ENCODE measurements at regions of chr1 and their contacts with region 1.

Region 1: DNA sequence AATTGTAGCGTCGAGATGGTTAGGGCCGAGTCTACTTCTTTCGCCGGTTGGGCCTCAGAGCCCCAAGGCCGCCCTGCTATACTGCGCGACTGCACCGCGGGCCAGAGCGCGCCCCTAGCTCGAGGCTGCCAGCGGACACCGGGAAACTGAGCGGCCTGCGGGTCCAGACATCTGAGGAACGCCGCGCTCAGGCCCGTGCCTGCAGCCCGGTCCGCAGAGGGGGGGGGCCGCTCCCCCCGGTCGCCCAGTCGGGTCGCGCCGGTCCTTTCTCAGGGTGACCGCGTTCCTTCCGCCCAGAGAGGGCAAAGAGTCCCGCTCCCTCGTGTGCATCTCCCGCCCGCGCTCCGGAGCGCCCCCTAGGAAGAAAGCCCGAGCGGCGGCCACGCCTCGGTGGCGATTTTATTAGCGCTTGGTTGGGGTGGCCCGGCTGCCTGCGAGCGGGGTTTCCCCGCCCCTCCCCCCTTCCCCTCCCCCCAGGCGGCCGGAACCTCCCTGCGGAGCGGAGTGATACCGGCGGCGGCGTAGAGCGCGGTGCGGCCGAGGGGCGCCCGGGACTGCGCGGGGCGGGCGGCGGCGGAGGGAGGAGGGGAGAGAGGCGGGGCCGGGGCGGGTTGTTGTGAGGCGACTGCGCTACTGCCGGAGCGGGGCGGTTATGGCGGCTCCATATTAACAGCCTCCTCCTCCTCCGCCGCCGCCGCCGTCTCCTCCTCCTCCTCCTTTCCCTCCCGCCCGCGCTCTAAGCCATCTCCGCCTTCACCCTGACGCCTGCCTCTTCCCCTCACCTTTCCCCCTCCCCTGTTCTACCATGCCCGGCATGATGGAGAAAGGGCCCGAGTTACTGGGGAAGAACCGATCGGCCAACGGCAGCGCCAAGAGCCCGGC is at the start of gene RCOR3:
- DNase-seq: peak; percentile 92 to 93
- ATAC-seq: peak; percentile 67 to 72
- H3K4me3 ChIP-seq: peak within 1 kb of the TSS; percentile 76 to 96 (median 90)
- H3K27ac ChIP-seq: peak within 1 kb of the TSS; percentile 97 to 100 (median 98)
- H3K4me1 ChIP-seq: peaks cover 18 to 26% of the 10 kb centered on the region in 2 donors
- H3K27me3 ChIP-seq: no peaks in the 10 kb centered on the region
- CTCF ChIP-seq: peak; percentile 51 to 67 (median 54)
- POLR2A ChIP-seq: peak; percentile 65 to 71
- total RNA-seq, gene RCOR3: 41.3 to 72.9 (median 61.3) TPM

Region 2: DNA sequence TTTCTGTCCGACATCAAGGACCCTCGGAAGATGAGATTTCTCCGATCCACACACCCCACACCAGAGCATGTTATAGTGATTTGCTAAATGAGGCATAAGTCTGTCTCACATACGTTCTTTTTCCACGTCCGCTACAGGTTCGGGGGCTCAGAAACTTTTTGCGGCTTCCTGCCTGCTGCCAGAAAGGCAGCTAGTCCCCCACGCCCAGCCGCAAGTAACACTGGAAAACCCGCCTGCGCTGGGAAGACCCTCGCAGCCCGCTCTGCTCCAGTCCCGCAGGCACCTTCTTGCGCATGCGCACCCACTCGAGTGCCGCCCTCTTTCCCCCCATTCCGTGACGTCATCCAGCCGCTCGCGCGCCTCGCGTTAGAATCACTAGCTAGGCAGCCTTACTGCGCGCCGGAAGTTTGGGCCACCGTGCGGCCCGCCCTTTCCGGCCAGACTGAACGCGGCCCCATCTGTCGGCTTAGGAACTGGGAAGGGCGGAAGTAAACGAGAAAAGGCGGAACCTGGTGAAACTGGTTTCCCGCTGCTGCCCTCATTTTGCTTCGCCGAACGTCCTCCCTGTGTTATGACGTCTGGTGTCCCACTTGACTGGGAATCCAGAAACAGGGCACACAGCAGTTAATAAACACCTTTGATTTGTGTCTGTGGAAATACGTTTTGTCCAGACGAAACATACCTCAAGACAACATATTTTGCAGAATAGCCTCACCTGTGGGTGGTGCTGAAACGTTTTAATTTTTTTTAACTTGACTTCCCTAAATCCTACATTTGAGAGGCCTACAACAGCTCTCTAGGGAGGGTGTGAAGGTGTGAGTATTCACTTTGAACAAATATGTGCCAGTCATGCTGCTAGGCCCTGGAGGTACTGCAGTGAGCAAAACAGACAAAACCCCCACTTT is 1474.5 kb before region 1 on chr1 and contains the start of gene C1orf74:
- in situ Hi-C with region 1: no loop called
- intact Hi-C with region 1: no loop called
- DNase-seq: peak; percentile 94 to 97
- ATAC-seq: peak; percentile 98
- H3K4me3 ChIP-seq: peak within 1 kb of the TSS; percentile 58 to 86 (median 76)
- H3K27ac ChIP-seq: peak within 1 kb of the TSS; percentile 75 to 88 (median 82)
- H3K4me1 ChIP-seq: peaks cover 12 to 17% of the 10 kb centered on the region in 2 donors
- H3K27me3 ChIP-seq: peaks cover 0 to 13% (median 4%) of the 10 kb centered on the region in 3 donors
- CTCF ChIP-seq: no peak
- POLR2A ChIP-seq: peak; percentile 37 to 49
- total RNA-seq, gene C1orf74: 0.38 to 0.82 (median 0.54) TPM

Region 3: DNA sequence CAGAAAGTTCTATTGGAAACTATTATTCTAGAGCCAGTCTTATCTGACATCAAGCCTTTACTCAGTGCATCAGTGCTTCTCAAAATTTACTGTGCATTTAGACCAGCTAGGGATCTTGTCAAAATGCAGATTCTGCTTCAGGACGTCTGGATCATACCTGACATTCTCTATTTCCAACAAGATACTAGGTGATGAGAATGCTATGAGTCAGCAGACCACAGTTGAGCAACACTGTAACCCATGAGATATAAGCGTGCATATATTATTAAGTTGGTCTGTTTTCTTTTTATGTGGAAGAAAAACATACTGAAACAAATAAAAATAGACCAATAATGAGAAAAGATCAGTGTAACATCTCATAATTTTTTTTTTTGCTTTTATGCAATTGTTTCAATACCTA is 84.6 kb before region 1 on chr1:
- in situ Hi-C with region 1: no loop called
- intact Hi-C with region 1: no loop called
- DNase-seq: no peak
- ATAC-seq: no peak
- H3K4me3 ChIP-seq: no peak overlapping the region
- H3K27ac ChIP-seq: no peak overlapping the region
- H3K4me1 ChIP-seq: no peaks in the 10 kb centered on the region
- H3K27me3 ChIP-seq: no peaks in the 10 kb centered on the region
- CTCF ChIP-seq: no peak
- POLR2A ChIP-seq: no peak

Region 4: GRCh38 chr1:211279340-211279739 is 20.3 kb after region 1 on chr1:
- in situ Hi-C with region 1: no loop called
- intact Hi-C with region 1: loop called (anchors 2 kb)
- DNase-seq: no peak
- ATAC-seq: no peak
- H3K4me3 ChIP-seq: no peak overlapping the region
- H3K27ac ChIP-seq: no peak overlapping the region
- H3K4me1 ChIP-seq: peaks cover 0 to 15% of the 10 kb centered on the region in 2 donors
- H3K27me3 ChIP-seq: no peaks in the 10 kb centered on the region
- CTCF ChIP-seq: no peak
- POLR2A ChIP-seq: no peak

Region 5: DNA sequence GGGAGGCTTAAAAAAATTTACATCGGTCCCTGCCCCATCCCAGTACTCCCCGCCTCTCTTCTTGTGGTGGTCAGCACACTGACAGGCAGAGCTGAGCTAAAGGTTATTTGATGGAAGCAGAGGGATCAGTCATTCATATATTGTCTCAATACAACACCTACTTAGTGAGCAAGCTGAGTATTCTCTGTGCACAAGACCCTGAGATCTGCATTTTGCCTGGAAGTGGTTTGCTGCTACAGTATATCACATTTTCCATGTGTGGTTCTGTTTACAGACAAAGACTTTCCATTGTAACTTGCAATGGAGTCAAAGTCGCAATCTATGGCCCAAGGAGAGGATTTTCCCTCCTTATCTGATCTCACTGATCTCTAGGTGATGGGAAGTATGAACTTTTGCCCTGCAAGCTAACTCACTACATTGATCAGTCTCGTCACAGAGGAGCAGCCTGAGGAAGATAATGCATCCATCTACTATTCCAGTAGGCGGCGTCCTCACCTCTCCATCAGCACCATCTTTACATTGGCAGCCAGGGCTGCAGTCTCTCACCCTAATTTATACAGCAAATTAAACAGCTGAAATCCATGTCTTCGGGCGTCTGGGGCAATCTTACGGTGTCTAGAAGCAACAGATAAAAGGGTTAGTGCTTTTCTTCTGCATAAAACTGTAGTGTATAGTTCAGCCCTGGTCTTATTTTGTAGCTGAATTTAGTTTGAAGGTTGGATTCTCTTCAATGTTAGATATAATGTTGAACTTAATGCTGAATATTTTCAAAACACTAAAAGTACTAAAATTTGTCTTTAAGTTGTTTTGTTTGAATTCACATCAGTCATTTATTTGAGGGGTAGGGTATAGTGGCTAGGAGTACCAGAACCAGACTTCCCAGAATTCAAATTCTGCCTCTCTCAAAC is 64.4 kb after region 1 on chr1:
- in situ Hi-C with region 1: loop called in 1 of 4 experiments (anchors 10 kb)
- intact Hi-C with region 1: no loop called
- DNase-seq: no peak
- ATAC-seq: peak in 1 of 2 donors; percentile 28
- H3K4me3 ChIP-seq: no peak overlapping the region
- H3K27ac ChIP-seq: no peak overlapping the region
- H3K4me1 ChIP-seq: no peaks in the 10 kb centered on the region
- H3K27me3 ChIP-seq: no peaks in the 10 kb centered on the region
- CTCF ChIP-seq: peak in 4 of 5 experiments; percentile 38 to 64 (median 44)
- POLR2A ChIP-seq: no peak

Region 6: DNA sequence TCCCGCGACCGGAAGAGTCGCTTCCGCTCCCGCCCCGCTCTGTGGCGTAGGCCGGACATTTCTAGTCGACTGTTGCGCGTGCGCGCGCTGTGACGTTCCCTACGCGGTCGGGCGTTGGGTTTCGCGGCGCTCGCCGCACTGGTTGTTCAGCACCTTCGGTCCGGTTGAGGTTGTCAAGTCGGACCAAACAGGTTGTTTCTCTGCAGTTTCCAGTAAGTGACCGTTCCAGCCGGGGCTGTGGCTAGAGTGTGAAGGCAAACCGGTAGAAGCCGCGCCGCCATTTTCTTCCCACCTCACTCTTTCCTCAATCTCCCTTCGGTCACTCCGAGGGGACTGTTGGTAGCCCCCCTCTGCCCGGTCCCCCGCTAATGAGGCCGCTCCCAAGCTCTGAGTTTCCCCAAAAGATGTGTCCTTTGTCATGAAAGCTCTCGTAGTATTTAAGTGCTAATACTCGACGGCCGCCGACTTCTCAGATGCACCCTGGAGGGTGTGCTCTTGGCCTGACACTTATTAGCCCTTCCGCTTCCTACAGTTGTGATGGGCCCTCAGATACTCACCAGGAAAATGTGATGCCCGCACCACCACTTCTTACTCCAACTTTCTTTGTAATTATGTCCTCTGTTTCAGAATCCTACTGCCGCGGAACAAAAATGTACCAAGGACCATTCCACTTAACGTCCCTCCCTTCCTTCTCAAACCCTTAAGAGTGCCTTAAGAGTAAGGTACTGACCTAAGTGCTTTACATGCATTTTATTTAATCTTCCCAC is 123.9 kb after region 1 on chr1:
- in situ Hi-C with region 1: no loop called
- intact Hi-C with region 1: loop called (anchors 1 kb)
- DNase-seq: peak; percentile 73 to 89
- ATAC-seq: peak; percentile 96 to 99
- H3K4me3 ChIP-seq: peak overlapping the region; percentile 75 to 92 (median 88)
- H3K27ac ChIP-seq: peak overlapping the region; percentile 91 to 98 (median 94)
- H3K4me1 ChIP-seq: peaks cover 5 to 8% of the 10 kb centered on the region in 2 donors
- H3K27me3 ChIP-seq: no peaks in the 10 kb centered on the region
- CTCF ChIP-seq: no peak
- POLR2A ChIP-seq: peak; percentile 87

Region 7: GRCh38 chr1:211578640-211579433 is 319.8 kb after region 1 on chr1 and contains the start of gene SLC30A1:
- in situ Hi-C with region 1: no loop called
- intact Hi-C with region 1: loop called (anchors 10 kb)
- DNase-seq: peak; percentile 97 to 98
- ATAC-seq: peak; percentile 89
- H3K4me3 ChIP-seq: peak within 1 kb of the TSS; percentile 76 to 88 (median 84)
- H3K27ac ChIP-seq: peak within 1 kb of the TSS; percentile 78 to 90 (median 86)
- H3K4me1 ChIP-seq: peaks cover 26 to 30% of the 10 kb centered on the region in 2 donors
- H3K27me3 ChIP-seq: no peaks in the 10 kb centered on the region
- CTCF ChIP-seq: no peak
- POLR2A ChIP-seq: peak; percentile 77 to 87
- total RNA-seq, gene SLC30A1: 1.3 to 3.0 (median 2.1) TPM

Region 8: GRCh38 chr1:212608209-212608955 is 1349.4 kb after region 1 on chr1 and contains the start of gene ATF3:
- in situ Hi-C with region 1: no loop called
- intact Hi-C with region 1: loop called (anchors 5 kb)
- DNase-seq: peak; percentile 100
- ATAC-seq: peak; percentile 81 to 93
- H3K4me3 ChIP-seq: peak within 1 kb of the TSS; percentile 76 to 92 (median 80)
- H3K27ac ChIP-seq: peak within 1 kb of the TSS; percentile 90 to 95 (median 93)
- H3K4me1 ChIP-seq: peaks cover 14 to 22% of the 10 kb centered on the region in 2 donors
- H3K27me3 ChIP-seq: peaks cover 21 to 39% (median 31%) of the 10 kb centered on the region in 3 donors
- CTCF ChIP-seq: no peak
- POLR2A ChIP-seq: peak; percentile 99
- total RNA-seq, gene ATF3: 1.9 to 7.4 (median 7.2) TPM

Measured in gastrocnemius medialis (tissue), 4 donors.